CD4-positive, alpha-beta T cell (primary cell): ENCODE measurements at regions of chr17 and their contacts with region 1.

Region 1: GRCh38 chr17:46154151-46154816 is 38.9 kb downstream of the KANSL1 start:
- DNase-seq: peak in 5 of 14 experiments; percentile 11 to 61 (median 36)
- ATAC-seq: peak; percentile 69
- H3K4me3 ChIP-seq: no peak overlapping the region
- H3K4me3 Mint-ChIP-seq: peak overlapping the region; percentile 72
- H3K27ac ChIP-seq: peak overlapping the region in 1 of 2 donors; percentile 9
- H3K27ac Mint-ChIP-seq: peak overlapping the region; percentile 76
- H3K4me1 ChIP-seq: peaks cover 51% of the 10 kb centered on the region
- H3K4me1 Mint-ChIP-seq: peaks cover 89% of the 10 kb centered on the region
- H3K27me3 ChIP-seq: no peaks in the 10 kb centered on the region
- H3K27me3 Mint-ChIP-seq: no peaks in the 10 kb centered on the region
- CTCF ChIP-seq: no peak

Region 2: DNA sequence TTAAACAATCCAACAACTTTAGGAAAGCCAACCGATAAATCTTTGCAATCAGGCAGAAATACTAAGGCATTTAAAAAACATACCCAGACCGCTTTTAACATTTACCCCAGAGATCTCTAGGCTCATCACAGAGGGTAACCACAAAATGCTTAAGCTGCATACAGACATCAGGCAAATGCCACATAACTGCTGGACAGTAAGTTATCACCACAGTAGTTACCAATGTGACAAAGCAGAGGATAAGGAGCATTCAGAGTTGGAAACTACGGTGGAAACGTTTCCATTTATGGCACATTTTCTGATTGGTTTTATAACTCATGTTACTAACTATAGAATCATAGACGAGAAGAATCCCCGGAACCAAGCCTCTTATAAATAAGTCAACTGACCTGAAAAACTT is 38.6 kb before region 1 on chr17:
- CTCF ChIA-PET with region 1: no interaction called
- POLR2A ChIA-PET with region 1: no interaction called
- intact Hi-C with region 1: loop called (anchors 5 kb)
- DNase-seq: no peak
- ATAC-seq: no peak
- H3K4me3 ChIP-seq: no peak overlapping the region
- H3K4me3 Mint-ChIP-seq: no peak overlapping the region
- H3K27ac ChIP-seq: no peak overlapping the region
- H3K27ac Mint-ChIP-seq: peak overlapping the region; percentile 11
- H3K4me1 ChIP-seq: peaks cover 18% of the 10 kb centered on the region
- H3K4me1 Mint-ChIP-seq: peaks cover 88% of the 10 kb centered on the region
- H3K27me3 ChIP-seq: no peaks in the 10 kb centered on the region
- H3K27me3 Mint-ChIP-seq: no peaks in the 10 kb centered on the region
- CTCF ChIP-seq: no peak

Region 3: GRCh38 chr17:46121841-46122485 is 32.3 kb before region 1 on chr17:
- CTCF ChIA-PET with region 1: interaction called, 5 read pairs
- POLR2A ChIA-PET with region 1: no interaction called
- intact Hi-C with region 1: loop called (anchors 5 kb)
- DNase-seq: no peak
- ATAC-seq: peak; percentile 27
- H3K4me3 ChIP-seq: no peak overlapping the region
- H3K4me3 Mint-ChIP-seq: peak overlapping the region; percentile 26
- H3K27ac ChIP-seq: no peak overlapping the region
- H3K27ac Mint-ChIP-seq: peak overlapping the region; percentile 78
- H3K4me1 ChIP-seq: peaks cover 42% of the 10 kb centered on the region
- H3K4me1 Mint-ChIP-seq: peaks cover 91% of the 10 kb centered on the region
- H3K27me3 ChIP-seq: no peaks in the 10 kb centered on the region
- H3K27me3 Mint-ChIP-seq: no peaks in the 10 kb centered on the region
- CTCF ChIP-seq: no peak

Region 4: DNA sequence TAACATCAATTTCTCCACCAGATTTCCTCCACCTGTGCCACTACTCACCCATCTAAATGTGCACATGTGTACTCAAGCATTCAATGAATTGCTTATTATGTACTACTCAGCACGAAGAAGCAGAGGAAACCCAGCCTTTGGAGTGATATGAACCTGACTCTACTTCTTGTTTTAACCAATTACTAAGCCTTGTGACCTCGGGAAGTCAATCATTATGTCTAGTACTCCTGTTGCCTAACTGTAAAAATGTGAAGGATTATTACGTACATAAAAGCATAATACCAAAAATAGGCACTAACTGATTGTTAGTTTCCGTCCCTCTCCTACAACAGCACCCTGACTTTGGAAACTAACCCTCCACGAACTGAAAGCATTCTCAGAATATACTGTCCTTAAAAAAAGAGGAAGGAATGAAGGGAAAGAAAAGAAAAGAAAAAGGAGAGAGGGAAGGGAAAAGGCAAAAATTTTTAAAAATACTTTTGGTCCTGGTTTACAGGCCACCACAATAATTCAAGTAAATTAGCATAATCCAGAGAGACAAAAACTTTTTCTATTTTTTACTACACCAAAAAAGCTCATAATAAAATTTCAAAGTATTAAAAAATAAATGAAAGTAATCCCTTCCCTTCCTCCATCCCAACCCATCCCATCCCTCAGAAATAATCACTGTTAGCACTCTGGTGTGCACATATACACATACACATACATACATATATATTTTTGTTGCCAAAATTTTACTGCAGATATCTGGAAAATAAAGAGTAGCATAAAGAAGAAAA is 14.7 kb before region 1 on chr17:
- CTCF ChIA-PET with region 1: interaction called, 13 read pairs
- POLR2A ChIA-PET with region 1: interaction called, 3 read pairs
- intact Hi-C with region 1: loop called in 1 of 2 experiments (anchors 2 kb)
- DNase-seq: no peak
- ATAC-seq: no peak
- H3K4me3 ChIP-seq: no peak overlapping the region
- H3K4me3 Mint-ChIP-seq: peak overlapping the region; percentile 40
- H3K27ac ChIP-seq: no peak overlapping the region
- H3K27ac Mint-ChIP-seq: peak overlapping the region; percentile 75
- H3K4me1 ChIP-seq: peaks cover 26% of the 10 kb centered on the region
- H3K4me1 Mint-ChIP-seq: peaks cover 97% of the 10 kb centered on the region
- H3K27me3 ChIP-seq: no peaks in the 10 kb centered on the region
- H3K27me3 Mint-ChIP-seq: no peaks in the 10 kb centered on the region
- CTCF ChIP-seq: no peak

Region 5: DNA sequence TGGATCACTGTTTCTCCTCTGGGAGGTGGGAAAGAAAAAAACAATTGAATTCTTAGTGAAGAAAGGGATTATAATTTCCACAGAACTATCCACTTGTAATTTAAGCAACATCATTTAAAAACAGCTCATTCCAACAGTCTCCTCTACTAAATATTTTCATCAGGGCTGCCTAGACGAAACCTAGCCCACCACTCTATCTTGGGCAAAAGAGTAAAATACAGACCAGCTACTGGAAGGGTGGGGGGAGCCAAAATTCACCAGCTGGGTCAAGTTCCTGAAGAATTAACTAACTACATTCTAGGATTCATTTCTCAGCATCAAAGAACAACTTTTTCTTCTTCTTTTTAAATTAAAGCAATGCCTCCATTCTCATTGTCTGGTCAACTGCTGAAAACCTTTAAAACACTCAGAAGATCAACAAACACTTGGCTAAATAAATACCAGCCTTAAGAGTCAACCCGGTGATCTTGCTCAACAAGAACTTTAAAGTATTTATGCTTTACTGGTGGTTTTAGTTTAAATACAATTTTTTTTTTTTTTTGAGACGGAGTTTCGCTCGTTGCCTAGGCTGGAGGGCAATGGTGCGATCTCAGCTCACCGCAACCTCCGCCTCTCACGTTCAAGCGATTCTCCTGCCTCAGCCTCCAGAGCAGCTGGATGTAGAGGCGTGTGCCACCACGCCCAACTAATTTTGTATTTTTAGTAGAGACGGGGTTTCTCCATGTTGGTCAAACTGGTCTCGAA is 13.7 kb after region 1 on chr17:
- CTCF ChIA-PET with region 1: interaction called, 6 read pairs
- POLR2A ChIA-PET with region 1: interaction called, 3 read pairs
- intact Hi-C with region 1: loop called in 1 of 2 experiments (anchors 2 kb)
- DNase-seq: no peak
- ATAC-seq: no peak
- H3K4me3 ChIP-seq: no peak overlapping the region
- H3K4me3 Mint-ChIP-seq: peak overlapping the region; percentile 52
- H3K27ac ChIP-seq: no peak overlapping the region
- H3K27ac Mint-ChIP-seq: peak overlapping the region; percentile 46
- H3K4me1 ChIP-seq: peaks cover 46% of the 10 kb centered on the region
- H3K4me1 Mint-ChIP-seq: peaks cover 86% of the 10 kb centered on the region
- H3K27me3 ChIP-seq: no peaks in the 10 kb centered on the region
- H3K27me3 Mint-ChIP-seq: no peaks in the 10 kb centered on the region
- CTCF ChIP-seq: no peak